ENCODE measurements at regions of chr5 and their contacts with region 1.

Region 1: DNA sequence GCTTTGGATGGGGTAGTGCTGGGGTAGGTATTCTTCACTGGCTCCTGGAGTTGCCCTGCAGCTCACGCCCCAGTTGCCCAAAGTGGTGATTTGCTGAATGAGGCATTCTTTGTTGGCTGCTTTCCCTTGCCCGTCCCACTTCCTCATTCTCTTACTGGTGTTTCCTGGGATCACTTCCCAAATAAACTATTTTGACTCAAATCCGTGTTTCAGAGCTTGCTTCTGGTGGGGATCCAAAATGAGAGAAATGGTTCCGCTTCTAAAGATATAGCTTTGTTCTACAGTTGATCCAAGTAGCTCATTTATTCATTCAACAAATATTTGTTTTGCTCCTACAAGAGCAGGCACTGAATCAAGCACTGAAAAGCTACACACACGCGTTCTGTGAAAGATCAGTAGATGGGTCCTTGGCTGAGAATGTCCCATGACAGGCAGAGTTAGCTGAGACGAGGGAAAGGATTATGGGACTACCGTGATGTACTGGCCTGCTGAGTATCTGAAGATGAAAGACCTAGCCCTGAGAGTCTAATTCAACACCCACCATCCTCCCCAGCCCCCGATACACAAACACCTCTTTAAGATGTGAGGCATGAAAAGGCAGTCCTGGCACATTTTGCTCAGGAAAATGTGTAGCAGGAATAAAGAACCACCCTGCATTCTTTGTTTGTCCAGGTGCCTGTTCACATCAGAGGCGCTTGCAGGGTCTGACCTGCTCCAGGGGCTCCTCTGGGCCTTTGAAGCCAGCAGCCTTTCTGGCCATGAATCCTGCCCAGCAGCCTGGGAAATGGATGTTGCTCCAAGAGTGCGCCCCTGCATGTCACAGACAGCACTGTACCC is 143.1 kb upstream of the RANBP3L start:
- DNase-seq: peak in 4 of 10 donors; percentile 29 to 80 (median 56)

Region 2: DNA sequence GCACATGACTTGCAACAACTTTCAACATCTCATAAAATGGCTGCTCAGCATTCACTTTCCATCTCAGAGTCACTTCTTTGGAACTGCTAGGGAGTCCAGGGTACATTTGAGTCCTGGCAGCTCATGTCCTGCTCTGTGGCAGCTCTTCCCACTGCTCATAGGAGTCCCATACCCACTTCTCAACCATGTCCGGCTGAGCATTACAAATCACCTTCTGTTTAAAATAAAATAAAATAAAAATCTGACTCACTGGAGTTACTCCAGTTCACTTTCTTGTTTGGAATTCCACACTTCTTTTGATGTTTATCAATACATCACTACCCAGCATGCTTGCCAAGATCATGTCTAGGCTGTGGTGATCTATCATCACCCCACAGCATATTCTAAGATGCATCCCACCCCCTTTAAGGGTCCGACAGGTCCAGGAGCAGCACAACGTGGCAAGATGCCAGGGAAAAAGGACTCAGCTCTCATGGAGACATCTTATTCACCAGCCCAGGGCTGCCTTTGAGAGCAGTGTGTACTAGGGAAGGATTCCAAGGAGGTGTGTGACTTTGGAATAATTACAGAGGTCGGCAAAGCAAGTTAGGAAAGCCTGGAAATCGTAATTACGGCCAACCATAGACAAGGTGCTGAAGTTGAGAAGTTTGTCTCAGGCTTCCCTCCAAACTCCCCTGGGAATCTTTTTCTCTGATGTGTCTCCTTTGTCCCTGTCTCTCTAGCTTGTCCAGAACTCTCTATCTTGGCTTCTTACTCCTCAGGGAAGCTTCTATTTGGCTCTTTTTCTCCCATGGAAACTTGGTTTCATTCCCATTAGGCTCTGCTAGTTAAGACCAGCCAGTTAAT is 50.2 kb after region 1 on chr5:
- intact Hi-C with region 1: loop called (anchors 10 kb)
- DNase-seq: peak in 1 of 10 donors; percentile 56